ENCODE measurements at regions of chr2 and their contacts with region 1.

Region 1: GRCh38 chr2:38508311-38509039 is 94.3 kb downstream of the HNRNPLL start:
- DNase-seq: peak; percentile 74
- H3K4me3 ChIP-seq: no peak overlapping the region; a peak in 1 of 4 replicates
- H3K27ac ChIP-seq: peak overlapping the region; percentile 58 to 66
- H3K4me1 ChIP-seq: peaks cover 17 to 18% of the 10 kb centered on the region in 2 experiments; a peak in 3 of 4 replicates
- H3K27me3 ChIP-seq: no peaks in the 10 kb centered on the region
- CTCF ChIP-seq: peak; percentile 67
- EP300 ChIP-seq: 0 out of 4 replicates have a peak, but pooled peaks of 1 of the 2 experiments have one; percentile 9
- RAD21 ChIP-seq: peak; percentile 92

Region 2: GRCh38 chr2:38274286-38275276 is 233.9 kb before region 1 on chr2:
- CTCF ChIA-PET with region 1: interaction called, 15 read pairs
- POLR2A ChIA-PET with region 1: no interaction called
- DNase-seq: peak; percentile 81
- H3K4me3 ChIP-seq: no peak overlapping the region
- H3K27ac ChIP-seq: 0 out of 4 replicates have a peak overlapping the region, but pooled peaks of 1 of the 2 experiments have one; percentile 18
- H3K4me1 ChIP-seq: no peaks in the 10 kb centered on the region; a peak in 1 of 4 replicates
- H3K27me3 ChIP-seq: no peaks in the 10 kb centered on the region
- CTCF ChIP-seq: peak; percentile 86
- EP300 ChIP-seq: peak in 1 of 2 experiments; percentile 50; a peak in 1 of 4 replicates
- RAD21 ChIP-seq: peak; percentile 100

Region 3: GRCh38 chr2:38327580-38327979 is 180.9 kb before region 1 on chr2:
- CTCF ChIA-PET with region 1: interaction called, 206 read pairs
- POLR2A ChIA-PET with region 1: no interaction called
- DNase-seq: no peak
- H3K4me3 ChIP-seq: no peak overlapping the region
- H3K27ac ChIP-seq: no peak overlapping the region
- H3K4me1 ChIP-seq: no peaks in the 10 kb centered on the region; a peak in 3 of 4 replicates
- H3K27me3 ChIP-seq: no peaks in the 10 kb centered on the region
- CTCF ChIP-seq: no peak
- EP300 ChIP-seq: no peak
- RAD21 ChIP-seq: no peak

Region 4: DNA sequence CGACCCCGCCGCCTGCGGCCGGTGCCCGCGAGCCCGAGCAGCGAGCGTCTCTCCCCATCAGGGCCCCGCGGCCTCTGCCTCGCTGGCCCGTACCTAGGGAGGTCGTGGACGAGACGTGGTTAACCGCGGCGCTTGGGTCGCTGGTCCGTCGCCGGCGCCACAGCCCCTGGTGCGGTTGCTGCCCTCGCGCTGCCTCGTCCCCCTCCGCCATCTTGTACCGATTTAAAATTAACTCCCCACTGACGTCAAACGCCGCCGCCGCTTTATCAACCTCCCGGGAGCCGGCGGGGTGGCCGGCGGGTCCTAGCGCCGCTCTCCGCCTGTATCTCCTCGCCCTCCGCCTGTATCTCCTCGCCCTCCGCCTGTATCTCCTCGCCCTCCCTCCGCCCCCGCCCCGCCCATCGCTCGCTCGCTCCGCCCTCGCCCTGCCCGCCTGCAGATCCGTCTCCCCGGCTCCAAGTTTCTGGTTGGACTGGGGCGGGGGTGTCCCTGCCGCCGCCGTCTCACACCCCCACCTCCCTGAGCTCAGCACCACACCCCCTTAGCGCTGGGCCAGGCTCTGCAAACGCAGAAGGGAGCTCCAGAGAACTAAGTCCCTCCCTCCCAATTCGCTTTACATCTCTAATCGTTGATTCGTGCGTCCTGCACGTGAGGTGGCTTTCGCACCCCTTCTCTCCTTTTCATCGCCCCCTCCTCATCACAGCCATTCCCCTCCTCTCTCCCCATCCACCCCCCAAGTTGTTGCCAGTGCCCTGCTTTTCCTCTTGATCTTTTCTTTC is 131.2 kb before region 1 on chr2 and contains the start of gene ATL2:
- CTCF ChIA-PET with region 1: interaction called, 17 read pairs
- POLR2A ChIA-PET with region 1: no interaction called
- DNase-seq: peak; percentile 99
- H3K4me3 ChIP-seq: peak within 1 kb of the TSS; percentile 91 to 94
- H3K27ac ChIP-seq: peak within 1 kb of the TSS; percentile 81 to 94
- H3K4me1 ChIP-seq: peaks cover 14 to 16% of the 10 kb centered on the region in 2 experiments; a peak in 3 of 4 replicates
- H3K27me3 ChIP-seq: no peaks in the 10 kb centered on the region
- CTCF ChIP-seq: no peak
- EP300 ChIP-seq: peak in 1 of 2 experiments; percentile 50; a peak in 2 of 4 replicates
- RAD21 ChIP-seq: no peak
- polyA plus RNA-seq, gene ATL2: 30.5 and 55.8 TPM in 2 replicates

Region 5: GRCh38 chr2:38466876-38467767 is 41.4 kb before region 1 on chr2:
- CTCF ChIA-PET with region 1: interaction called, 23 read pairs
- POLR2A ChIA-PET with region 1: no interaction called
- DNase-seq: no peak
- H3K4me3 ChIP-seq: no peak overlapping the region
- H3K27ac ChIP-seq: no peak overlapping the region
- H3K4me1 ChIP-seq: peaks cover 0 to 13% of the 10 kb centered on the region in 2 experiments; a peak in 2 of 4 replicates
- H3K27me3 ChIP-seq: no peaks in the 10 kb centered on the region; the same call in 1 of the 2 replicates
- CTCF ChIP-seq: no peak
- EP300 ChIP-seq: no peak
- RAD21 ChIP-seq: no peak

Region 6: DNA sequence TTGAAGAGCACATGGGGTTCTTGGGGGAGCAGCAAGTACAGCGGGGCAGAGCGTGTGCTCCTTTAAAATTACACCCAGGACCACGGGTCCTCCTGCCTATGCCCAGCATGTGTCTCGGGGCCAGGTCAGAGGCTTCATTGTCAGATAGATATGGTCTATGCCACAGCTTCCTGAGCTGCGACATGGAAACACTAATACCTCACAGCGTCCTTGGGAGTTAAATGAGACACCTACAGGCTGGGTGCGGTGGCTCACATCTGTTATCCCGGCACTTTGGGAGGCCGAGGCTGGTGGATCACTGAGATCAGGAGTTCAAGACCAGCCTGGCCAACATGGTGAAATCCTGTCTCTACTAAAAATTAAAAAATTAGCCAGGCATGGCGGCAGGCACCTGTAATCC is 20.6 kb before region 1 on chr2:
- CTCF ChIA-PET with region 1: interaction called, 10 read pairs
- POLR2A ChIA-PET with region 1: no interaction called
- DNase-seq: no peak
- H3K4me3 ChIP-seq: no peak overlapping the region
- H3K27ac ChIP-seq: no peak overlapping the region
- H3K4me1 ChIP-seq: peaks cover 0 to 7% of the 10 kb centered on the region in 2 experiments; a peak in 1 of 4 replicates
- H3K27me3 ChIP-seq: no peaks in the 10 kb centered on the region
- CTCF ChIP-seq: no peak
- EP300 ChIP-seq: no peak
- RAD21 ChIP-seq: no peak

Region 7: DNA sequence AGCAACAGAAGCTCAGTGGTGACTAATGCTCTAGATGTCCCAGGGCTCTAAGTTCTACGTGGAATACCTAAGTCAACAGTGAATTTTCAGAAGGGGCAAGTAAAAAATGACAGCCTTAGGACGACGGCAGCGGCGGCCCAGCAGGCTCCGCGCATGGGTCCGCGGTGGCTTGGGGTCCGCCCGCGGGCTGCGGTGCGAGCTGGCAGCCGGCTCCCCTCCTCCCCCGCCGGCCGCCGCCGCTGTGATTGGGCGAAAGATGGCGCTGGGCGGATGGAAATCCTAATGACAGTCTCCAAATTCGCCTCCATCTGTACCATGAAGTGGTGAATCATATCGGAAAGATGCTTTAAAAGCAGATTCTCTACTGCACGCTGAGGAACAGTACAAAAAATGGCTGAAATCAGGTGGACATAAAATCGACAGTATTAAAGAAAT is 19.6 kb after region 1 on chr2:
- CTCF ChIA-PET with region 1: interaction called, 59 read pairs
- POLR2A ChIA-PET with region 1: no interaction called
- DNase-seq: peak; percentile 96
- H3K4me3 ChIP-seq: peak overlapping the region; percentile 50 to 58
- H3K27ac ChIP-seq: peak overlapping the region; percentile 58 to 74
- H3K4me1 ChIP-seq: peaks cover 0 to 2% of the 10 kb centered on the region in 2 experiments; a peak in 2 of 4 replicates
- H3K27me3 ChIP-seq: no peaks in the 10 kb centered on the region
- CTCF ChIP-seq: no peak
- EP300 ChIP-seq: no peak; a peak in 1 of 4 replicates
- RAD21 ChIP-seq: peak; percentile 47